HepG2 (cell line): ENCODE measurements at regions of chr22 and their contacts with region 1.

Region 1: GRCh38 chr22:20885557-20886323 is 26.9 kb downstream of the SNAP29 start:
- DNase-seq: peak; percentile 85
- ATAC-seq: peak; percentile 98
- H3K4me3 ChIP-seq: peak overlapping the region in 2 of 3 experiments; percentile 32 to 67; a peak in 4 of 6 replicates
- H3K27ac ChIP-seq: peak overlapping the region; percentile 72
- H3K4me1 ChIP-seq: peaks cover 20% of the 10 kb centered on the region
- H3K27me3 ChIP-seq: no peaks in the 10 kb centered on the region
- CTCF ChIP-seq: peak; percentile 100
- EP300 ChIP-seq: no peak
- POLR2A ChIP-seq: no peak
- RAD21 ChIP-seq: peak; percentile 98

Region 2: DNA sequence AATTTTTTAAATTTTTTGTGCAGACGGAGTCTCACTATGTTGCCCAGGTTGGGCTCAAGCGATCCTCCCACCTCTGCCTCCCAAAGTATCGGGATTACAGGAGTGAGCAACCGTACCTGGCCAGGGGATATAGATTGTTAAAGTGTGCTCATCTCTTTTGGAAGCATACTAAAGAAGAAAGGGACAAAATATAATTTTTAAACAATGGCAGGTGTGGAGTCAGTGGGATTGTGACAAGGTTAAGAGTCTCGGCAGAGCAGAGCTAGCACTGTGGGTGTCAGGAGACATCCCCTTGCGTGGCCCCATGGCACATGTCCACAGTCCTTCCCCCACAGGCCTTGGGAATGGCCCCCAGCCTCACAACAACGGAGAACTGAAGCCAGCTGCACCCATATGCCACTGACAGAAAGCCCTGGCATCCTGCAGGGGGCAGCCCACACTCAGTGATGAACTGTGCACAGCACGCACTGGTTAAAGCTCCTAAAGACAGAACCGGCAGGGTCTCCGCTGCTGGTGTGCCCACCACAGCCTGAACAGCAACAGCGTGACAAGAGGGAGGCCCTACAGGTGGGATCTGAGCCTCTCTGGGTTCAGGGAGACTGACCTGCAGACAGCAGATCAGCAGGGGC is 81.9 kb before region 1 on chr22:
- CTCF ChIA-PET with region 1: interaction called, 12 read pairs
- POLR2A ChIA-PET with region 1: interaction called, 4 read pairs
- in situ Hi-C with region 1: no loop called
- intact Hi-C with region 1: loop called (anchors 1 kb)
- DNase-seq: peak; percentile 40
- ATAC-seq: peak; percentile 93
- H3K4me3 ChIP-seq: no peak overlapping the region
- H3K27ac ChIP-seq: no peak overlapping the region
- H3K4me1 ChIP-seq: no peaks in the 10 kb centered on the region
- H3K27me3 ChIP-seq: no peaks in the 10 kb centered on the region
- CTCF ChIP-seq: peak; percentile 88
- EP300 ChIP-seq: no peak
- POLR2A ChIP-seq: no peak
- RAD21 ChIP-seq: peak; percentile 80

Region 3: DNA sequence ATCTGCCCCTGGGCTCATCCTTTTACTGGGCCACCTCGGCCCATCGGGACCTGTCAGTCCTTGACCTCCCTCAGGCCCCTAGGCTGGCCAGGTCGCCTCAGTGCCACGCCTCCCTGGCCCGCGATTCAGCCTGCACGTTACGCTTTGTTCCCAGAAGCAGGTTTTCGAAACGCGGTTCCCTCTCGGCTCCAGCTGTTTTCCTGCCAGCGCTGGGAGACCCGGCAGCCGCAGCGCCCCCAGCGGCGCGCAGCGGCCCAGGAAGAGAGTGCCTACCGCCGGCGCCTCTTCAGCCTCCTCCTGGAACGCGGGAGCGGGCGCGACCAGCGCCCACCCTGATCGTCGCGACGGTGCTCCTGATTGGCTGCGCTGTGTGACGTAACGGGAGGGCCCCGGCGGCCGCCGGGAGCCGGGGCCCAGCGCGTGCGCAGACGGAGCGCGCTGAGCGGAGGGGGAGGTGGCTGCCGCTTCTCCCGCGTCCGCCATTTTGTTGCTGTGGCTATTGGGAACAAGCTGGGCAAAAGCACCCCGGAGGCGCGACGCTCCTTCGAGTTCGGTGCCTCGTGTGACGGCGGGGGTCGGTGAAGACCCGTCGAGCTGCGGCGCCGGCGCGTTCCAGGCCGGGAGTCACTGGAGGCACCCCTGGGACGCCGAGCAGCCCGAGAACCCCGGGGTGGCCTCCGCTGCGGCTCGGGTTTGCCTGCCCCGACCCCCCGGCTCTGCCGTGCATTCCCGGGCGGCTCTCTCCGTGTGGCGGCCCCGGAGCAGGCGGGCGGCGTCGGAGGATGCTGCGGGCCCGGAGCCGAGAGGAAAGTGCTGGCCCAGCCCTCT is 31.5 kb after region 1 on chr22 and contains the start of gene CRKL:
- CTCF ChIA-PET with region 1: no interaction called
- POLR2A ChIA-PET with region 1: interaction called, 3 read pairs
- in situ Hi-C with region 1: no loop called
- intact Hi-C with region 1: loop called (anchors 2 kb)
- DNase-seq: peak; percentile 94
- ATAC-seq: peak; percentile 97
- H3K4me3 ChIP-seq: peak within 1 kb of the TSS; percentile 96 to 99 (median 98)
- H3K27ac ChIP-seq: peak within 1 kb of the TSS; percentile 89
- H3K4me1 ChIP-seq: peaks cover 48% of the 10 kb centered on the region
- H3K27me3 ChIP-seq: no peaks in the 10 kb centered on the region; a peak in 1 of 5 replicates
- CTCF ChIP-seq: peak; percentile 96
- EP300 ChIP-seq: 0 out of 4 replicates have a peak, but pooled peaks of 1 of the 2 experiments have one; percentile 12
- POLR2A ChIP-seq: peak; percentile 74
- RAD21 ChIP-seq: peak; percentile 87
- total RNA-seq, gene CRKL: 60.6 and 75.5 TPM in 2 replicates

Region 4: DNA sequence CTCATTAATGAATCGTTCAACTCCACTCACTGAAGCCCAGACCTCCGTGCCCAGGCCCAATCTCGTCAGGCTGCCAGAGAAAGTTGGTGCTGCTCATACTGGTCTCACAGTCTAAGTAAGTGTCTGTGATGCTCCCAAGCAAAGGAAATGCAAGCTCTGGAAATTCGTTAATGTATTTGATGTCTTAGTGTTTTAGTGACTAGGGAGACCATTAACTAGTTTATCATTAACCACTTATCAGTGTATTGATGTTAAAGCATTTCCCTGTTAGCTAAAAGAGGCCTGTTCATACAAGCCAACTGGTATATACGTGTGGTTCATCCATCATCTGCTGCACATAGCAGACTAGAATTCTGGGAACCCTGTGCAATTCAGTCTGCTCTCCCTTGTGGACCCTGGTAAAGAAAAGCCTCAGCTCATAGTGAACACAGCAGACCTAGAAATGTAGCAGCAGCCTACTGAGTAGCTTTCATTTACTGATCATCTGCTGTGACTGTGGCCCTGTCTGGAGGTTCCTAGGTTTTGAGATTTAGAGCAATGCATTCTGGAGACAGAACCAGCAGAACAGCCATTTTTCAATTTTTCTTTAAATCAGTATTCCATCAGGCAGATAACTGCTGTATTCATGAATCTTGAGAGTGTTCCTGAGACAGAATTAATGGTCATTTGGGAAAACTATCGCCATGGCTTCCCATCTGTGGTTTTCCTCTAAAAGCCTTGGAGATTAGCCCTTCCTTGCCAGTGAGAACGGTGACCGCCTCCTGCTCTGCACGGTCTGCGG is 65.6 kb after region 1 on chr22:
- CTCF ChIA-PET with region 1: no interaction called
- POLR2A ChIA-PET with region 1: interaction called, 22 read pairs
- in situ Hi-C with region 1: no loop called
- intact Hi-C with region 1: loop called (anchors 2 kb)
- DNase-seq: peak; percentile 89
- ATAC-seq: peak; percentile 66
- H3K4me3 ChIP-seq: peak overlapping the region in 2 of 3 experiments; percentile 29 to 46; a peak in 3 of 6 replicates
- H3K27ac ChIP-seq: peak overlapping the region; percentile 82
- H3K4me1 ChIP-seq: peaks cover 98% of the 10 kb centered on the region
- H3K27me3 ChIP-seq: no peaks in the 10 kb centered on the region
- CTCF ChIP-seq: no peak
- EP300 ChIP-seq: peak in 1 of 2 experiments; percentile 69; a peak in 2 of 4 replicates
- POLR2A ChIP-seq: peak; percentile 22 to 51; a peak in 2 of 4 replicates
- RAD21 ChIP-seq: no peak

Region 5: DNA sequence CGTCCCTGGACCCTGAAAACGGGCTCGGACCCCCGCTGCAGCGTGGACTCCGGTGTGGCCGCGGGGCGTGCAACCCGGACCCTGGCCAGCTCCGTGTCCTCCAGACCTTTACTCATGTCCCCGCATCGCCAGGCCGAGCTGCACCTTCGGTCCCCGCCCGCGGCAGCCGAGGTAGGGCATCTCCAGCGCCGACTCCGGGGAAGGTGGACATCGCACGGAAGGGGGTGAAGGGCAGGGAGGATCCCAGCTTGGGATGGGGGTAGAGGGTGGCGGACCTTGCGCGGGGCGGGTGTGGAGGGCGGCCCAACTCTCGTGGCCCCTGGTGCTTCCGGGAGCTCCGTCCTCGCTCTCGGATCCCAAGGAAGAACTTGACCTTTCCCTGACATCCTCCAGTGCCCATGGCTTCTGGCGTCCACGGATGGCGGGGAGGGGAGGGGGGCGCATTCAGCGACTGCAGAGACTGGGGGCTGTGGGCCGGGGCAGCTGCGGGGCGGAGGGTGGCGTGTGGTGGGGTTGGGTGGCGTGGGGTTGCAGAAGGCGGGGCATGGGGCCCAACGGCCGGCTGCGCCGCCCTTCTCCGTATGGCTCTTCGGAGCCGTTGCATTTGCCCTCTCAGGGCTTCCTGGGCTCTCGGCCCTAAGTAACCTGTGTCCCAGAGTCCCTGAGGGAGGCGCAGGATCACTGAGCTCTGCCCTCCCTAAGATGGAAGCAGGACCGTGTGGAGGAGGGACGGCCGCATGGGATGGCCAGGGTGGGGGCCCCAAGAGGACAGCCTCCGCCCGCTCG is 71.8 kb after region 1 on chr22:
- CTCF ChIA-PET with region 1: interaction called, 3 read pairs
- POLR2A ChIA-PET with region 1: interaction called, 22 read pairs
- in situ Hi-C with region 1: no loop called
- intact Hi-C with region 1: loop called (anchors 5 kb)
- DNase-seq: no peak
- ATAC-seq: peak; percentile 65
- H3K4me3 ChIP-seq: peak overlapping the region; percentile 87 to 97 (median 95)
- H3K27ac ChIP-seq: peak overlapping the region; percentile 56
- H3K4me1 ChIP-seq: peaks cover 62% of the 10 kb centered on the region
- H3K27me3 ChIP-seq: no peaks in the 10 kb centered on the region; a peak in 1 of 5 replicates
- CTCF ChIP-seq: peak; percentile 19; the same call in 1 of the 2 replicates
- EP300 ChIP-seq: no peak
- POLR2A ChIP-seq: peak in 1 of 2 experiments; percentile 51; a peak in 2 of 4 replicates
- RAD21 ChIP-seq: peak; percentile 22; the same call in 1 of the 2 replicates

Region 6: GRCh38 chr22:20965104-20965887 is 79.6 kb after region 1 on chr22:
- CTCF ChIA-PET with region 1: interaction called, 3 read pairs
- POLR2A ChIA-PET with region 1: no interaction called
- in situ Hi-C with region 1: no loop called
- intact Hi-C with region 1: loop called (anchors 5 kb)
- DNase-seq: no peak
- ATAC-seq: peak; percentile 10
- H3K4me3 ChIP-seq: peak overlapping the region; percentile 60 to 72 (median 64)
- H3K27ac ChIP-seq: peak overlapping the region; percentile 50
- H3K4me1 ChIP-seq: peaks cover 56% of the 10 kb centered on the region
- H3K27me3 ChIP-seq: no peaks in the 10 kb centered on the region
- CTCF ChIP-seq: 0 out of 2 replicates have a peak, but pooled peaks have one; percentile 2
- EP300 ChIP-seq: no peak
- POLR2A ChIP-seq: no peak
- RAD21 ChIP-seq: no peak; the same call in 1 of the 2 replicates

Region 7: GRCh38 chr22:21014202-21014725 is 128.5 kb after region 1 on chr22:
- CTCF ChIA-PET with region 1: no interaction called
- POLR2A ChIA-PET with region 1: no interaction called
- in situ Hi-C with region 1: no loop called
- intact Hi-C with region 1: no loop called
- DNase-seq: no peak
- ATAC-seq: peak; percentile 24
- H3K4me3 ChIP-seq: peak overlapping the region in 2 of 3 experiments; percentile 40 to 67; a peak in 2 of 6 replicates
- H3K27ac ChIP-seq: no peak overlapping the region
- H3K4me1 ChIP-seq: peaks cover 51% of the 10 kb centered on the region
- H3K27me3 ChIP-seq: peaks cover 0 to 9% of the 10 kb centered on the region in 2 experiments; a peak in 1 of 5 replicates
- CTCF ChIP-seq: no peak
- EP300 ChIP-seq: no peak
- POLR2A ChIP-seq: no peak
- RAD21 ChIP-seq: no peak